Activated CD4-positive, alpha-beta T cell treated with anti-CD3 and anti-CD28 coated beads, Interleukin-2, amount 10 ng/mL, durations not matched to agents 7 days and 5 days (primary cell): ENCODE measurements at regions of chr13 and their contacts with region 1.

Region 1: GRCh38 chr13:40102856-40103255 is 447.4 kb downstream of the COG6 start:
- DNase-seq: peak; percentile 12
- H3K4me3 Mint-ChIP-seq: no peak overlapping the region
- H3K27ac Mint-ChIP-seq: peak overlapping the region; percentile 78
- H3K4me1 Mint-ChIP-seq: peaks cover 32% of the 10 kb centered on the region
- H3K27me3 Mint-ChIP-seq: no peaks in the 10 kb centered on the region

Region 2: GRCh38 chr13:40116008-40116407 is 13.2 kb after region 1 on chr13:
- CTCF ChIA-PET with region 1: interaction called, 14 read pairs
- POLR2A ChIA-PET with region 1: no interaction called
- DNase-seq: peak; percentile 29
- H3K4me3 Mint-ChIP-seq: no peak overlapping the region
- H3K27ac Mint-ChIP-seq: peak overlapping the region; percentile 68
- H3K4me1 Mint-ChIP-seq: peaks cover 11% of the 10 kb centered on the region
- H3K27me3 Mint-ChIP-seq: peaks cover 1% of the 10 kb centered on the region